ENCODE measurements at regions of chr5 and their contacts with region 1.

Region 1: DNA sequence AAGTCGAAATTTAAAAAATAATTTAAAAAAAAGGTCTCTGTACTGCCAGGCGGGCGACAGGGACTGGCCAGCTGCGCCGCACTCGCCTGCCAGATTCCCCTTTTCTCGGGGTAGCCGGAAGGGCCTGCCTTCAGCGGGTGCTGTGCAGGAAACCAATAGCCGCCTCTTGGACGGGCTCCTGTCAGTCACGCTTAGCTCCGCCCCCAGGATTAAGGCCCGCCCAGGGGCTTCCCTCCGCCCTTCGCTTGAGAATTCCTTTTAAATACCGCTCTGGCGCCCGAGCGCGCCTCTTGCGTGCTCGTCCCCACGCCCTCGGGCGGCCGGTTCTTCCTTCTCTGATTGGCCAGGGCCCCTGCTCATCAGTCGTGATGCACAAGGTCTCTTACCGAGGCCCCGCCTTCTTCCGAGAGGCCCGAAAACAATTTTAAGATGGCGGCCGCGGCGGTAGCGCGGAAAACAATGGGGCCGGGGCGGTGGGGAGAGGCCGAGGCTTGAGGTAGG is at the start of gene MAML1:
- DNase-seq: peak; percentile 99 to 100 (median 99)
- H3K4me3 ChIP-seq: peak within 1 kb of the TSS; percentile 75
- H3K4me3 Mint-ChIP-seq: peak within 1 kb of the TSS; percentile 92 to 99 (median 95)
- H3K27ac ChIP-seq: peak within 1 kb of the TSS; percentile 89
- H3K27ac Mint-ChIP-seq: peak within 1 kb of the TSS; percentile 94 to 98 (median 96)
- H3K4me1 ChIP-seq: peaks cover 34% of the 10 kb centered on the region
- H3K4me1 Mint-ChIP-seq: peaks cover 35 to 49% (median 46%) of the 10 kb centered on the region in 3 donors
- H3K27me3 ChIP-seq: no peaks in the 10 kb centered on the region
- H3K27me3 Mint-ChIP-seq: no peaks in the 10 kb centered on the region
- total RNA-seq, gene MAML1: 30.4 to 30.9 TPM

Region 2: DNA sequence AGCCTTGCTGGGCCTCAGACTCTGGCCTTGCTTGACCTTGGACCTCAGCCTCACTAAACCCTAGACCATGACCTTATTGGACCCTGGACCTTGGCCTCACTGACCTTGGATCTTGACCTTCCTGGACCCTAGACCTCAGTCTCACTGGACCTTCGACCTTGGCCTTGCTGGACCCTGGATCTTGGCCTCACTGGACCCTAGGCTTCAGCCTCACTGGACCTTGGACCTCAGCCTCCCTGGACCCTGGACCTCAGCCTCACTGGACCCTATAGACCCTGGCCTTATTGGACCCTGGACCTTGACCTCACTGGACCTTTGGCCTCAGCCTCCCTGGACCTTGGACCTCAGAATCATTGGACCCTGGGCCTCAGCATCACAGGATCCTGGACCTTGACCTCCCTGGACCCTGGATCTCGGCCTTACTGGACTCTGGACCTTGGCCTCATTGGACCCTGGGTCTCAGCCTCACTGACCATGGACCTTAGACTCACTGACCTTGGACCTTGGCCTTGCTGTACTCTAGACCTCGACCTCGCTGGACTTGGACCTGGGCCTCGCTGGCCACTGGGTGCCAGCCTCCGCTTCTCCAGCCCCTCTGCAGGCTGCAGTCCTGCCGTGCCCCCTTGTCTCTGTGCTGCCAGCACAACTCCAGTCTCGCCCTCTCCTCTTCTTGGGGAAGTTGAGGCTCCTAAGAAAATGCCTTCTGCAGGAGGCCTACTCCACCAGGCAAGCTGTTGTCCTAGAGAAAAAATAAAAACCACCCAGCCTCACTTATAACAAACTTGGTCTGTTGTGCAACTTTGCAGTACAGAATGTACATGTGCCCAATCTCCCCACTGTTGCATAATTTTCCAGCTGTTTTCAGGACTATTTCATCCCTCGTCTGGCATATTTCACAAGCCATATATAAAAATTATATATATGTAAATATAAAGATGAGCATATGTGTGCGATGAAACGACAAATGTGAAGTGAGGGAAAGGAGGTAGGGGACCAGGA is 376.2 kb before region 1 on chr5:
- CTCF ChIA-PET with region 1: no interaction called
- POLR2A ChIA-PET with region 1: no interaction called
- DNase-seq: no peak
- H3K4me3 ChIP-seq: no peak overlapping the region
- H3K4me3 Mint-ChIP-seq: no peak overlapping the region
- H3K27ac ChIP-seq: no peak overlapping the region
- H3K27ac Mint-ChIP-seq: no peak overlapping the region
- H3K4me1 ChIP-seq: no peaks in the 10 kb centered on the region
- H3K4me1 Mint-ChIP-seq: no peaks in the 10 kb centered on the region
- H3K27me3 ChIP-seq: no peaks in the 10 kb centered on the region
- H3K27me3 Mint-ChIP-seq: peaks cover 6 to 11% of the 10 kb centered on the region in 2 donors

Region 3: GRCh38 chr5:179643556-179643955 is 88.9 kb before region 1 on chr5:
- CTCF ChIA-PET with region 1: no interaction called
- POLR2A ChIA-PET with region 1: no interaction called
- DNase-seq: no peak
- H3K4me3 ChIP-seq: no peak overlapping the region
- H3K4me3 Mint-ChIP-seq: no peak overlapping the region
- H3K27ac ChIP-seq: no peak overlapping the region
- H3K27ac Mint-ChIP-seq: no peak overlapping the region
- H3K4me1 ChIP-seq: no peaks in the 10 kb centered on the region
- H3K4me1 Mint-ChIP-seq: no peaks in the 10 kb centered on the region
- H3K27me3 ChIP-seq: no peaks in the 10 kb centered on the region
- H3K27me3 Mint-ChIP-seq: peaks cover 0 to 4% of the 10 kb centered on the region in 2 donors

Region 4: GRCh38 chr5:179678223-179679013 is 54.0 kb before region 1 on chr5:
- CTCF ChIA-PET with region 1: interaction called, 8 read pairs
- POLR2A ChIA-PET with region 1: interaction called, 10 read pairs
- DNase-seq: peak; percentile 89 to 94 (median 93)
- H3K4me3 ChIP-seq: peak overlapping the region; percentile 97
- H3K4me3 Mint-ChIP-seq: peak overlapping the region; percentile 88 to 99 (median 96)
- H3K27ac ChIP-seq: peak overlapping the region; percentile 91
- H3K27ac Mint-ChIP-seq: peak overlapping the region; percentile 87 to 98 (median 97)
- H3K4me1 ChIP-seq: peaks cover 14% of the 10 kb centered on the region
- H3K4me1 Mint-ChIP-seq: peaks cover 25 to 41% (median 27%) of the 10 kb centered on the region in 3 donors
- H3K27me3 ChIP-seq: no peaks in the 10 kb centered on the region
- H3K27me3 Mint-ChIP-seq: no peaks in the 10 kb centered on the region